ENCODE measurements at regions of chrX and their contacts with region 1.

Region 1: DNA sequence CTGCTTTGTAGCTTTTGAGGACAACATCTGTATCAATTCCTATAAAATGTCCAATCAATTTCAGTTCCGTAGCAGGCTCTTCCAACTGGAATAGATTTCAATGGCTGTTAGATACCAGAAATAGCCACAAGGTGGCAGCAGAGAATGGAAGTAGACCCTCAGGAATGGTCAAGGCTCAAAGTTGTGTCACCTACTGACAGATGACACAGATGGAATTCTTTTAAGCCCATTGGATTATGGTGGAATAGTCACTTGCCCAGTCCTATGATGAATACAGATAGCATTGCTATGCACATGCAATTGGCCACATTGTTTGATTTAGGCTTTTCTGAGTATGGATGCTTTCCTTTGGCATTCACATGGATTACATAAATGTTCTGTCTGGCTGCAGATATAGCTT is 130.4 kb upstream of the RADX start:
- DNase-seq: no peak
- H3K4me3 Mint-ChIP-seq: no peak overlapping the region
- H3K27ac Mint-ChIP-seq: no peak overlapping the region
- H3K4me1 Mint-ChIP-seq: peaks cover 27% of the 10 kb centered on the region
- H3K27me3 Mint-ChIP-seq: no peaks in the 10 kb centered on the region

Region 2: GRCh38 chrX:106451933-106452332 is 29.4 kb before region 1 on chrX:
- CTCF ChIA-PET with region 1: no interaction called
- POLR2A ChIA-PET with region 1: no interaction called
- intact Hi-C with region 1: loop called (anchors 2 kb)
- DNase-seq: no peak
- H3K4me3 Mint-ChIP-seq: no peak overlapping the region
- H3K27ac Mint-ChIP-seq: no peak overlapping the region
- H3K4me1 Mint-ChIP-seq: peaks cover 5% of the 10 kb centered on the region
- H3K27me3 Mint-ChIP-seq: no peaks in the 10 kb centered on the region

Region 3: GRCh38 chrX:106467422-106467821 is 13.9 kb before region 1 on chrX:
- CTCF ChIA-PET with region 1: no interaction called
- POLR2A ChIA-PET with region 1: no interaction called
- intact Hi-C with region 1: no loop called
- DNase-seq: no peak
- H3K4me3 Mint-ChIP-seq: no peak overlapping the region
- H3K27ac Mint-ChIP-seq: no peak overlapping the region
- H3K4me1 Mint-ChIP-seq: no peaks in the 10 kb centered on the region
- H3K27me3 Mint-ChIP-seq: peaks cover 3% of the 10 kb centered on the region

Region 4: DNA sequence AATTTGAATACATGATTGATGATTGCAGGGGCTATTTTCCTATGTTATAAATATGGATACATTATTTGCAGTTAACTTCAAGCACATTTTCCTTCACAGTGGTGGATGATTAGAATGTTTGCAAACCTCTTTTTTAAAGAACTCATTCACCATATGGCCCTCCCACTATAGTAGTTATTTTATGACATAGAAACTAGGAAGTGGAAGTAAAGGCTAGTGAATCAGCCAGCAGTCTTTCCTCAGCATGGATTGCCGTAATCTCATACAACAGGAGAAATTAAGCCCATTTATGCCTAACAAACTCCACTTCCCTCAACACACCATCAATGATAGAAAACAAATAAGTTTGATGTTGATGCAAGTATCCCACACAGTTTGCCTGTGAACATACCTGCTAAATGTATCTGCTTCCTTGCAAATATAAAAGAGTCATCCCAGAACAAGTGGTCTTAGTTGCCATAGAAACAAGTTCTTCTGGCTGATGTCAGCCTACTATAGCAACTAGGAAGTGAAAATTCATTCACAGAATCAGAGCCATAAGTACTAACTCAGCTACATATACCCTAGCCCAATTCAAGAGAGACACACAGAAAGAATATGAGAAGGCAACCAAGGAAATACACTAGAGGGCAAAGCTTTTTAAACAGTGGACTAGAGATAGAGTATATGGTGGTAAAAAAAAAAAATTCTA is 29.5 kb after region 1 on chrX:
- CTCF ChIA-PET with region 1: no interaction called
- POLR2A ChIA-PET with region 1: no interaction called
- intact Hi-C with region 1: no loop called
- DNase-seq: no peak
- H3K4me3 Mint-ChIP-seq: no peak overlapping the region
- H3K27ac Mint-ChIP-seq: no peak overlapping the region
- H3K4me1 Mint-ChIP-seq: no peaks in the 10 kb centered on the region
- H3K27me3 Mint-ChIP-seq: no peaks in the 10 kb centered on the region

Region 5: DNA sequence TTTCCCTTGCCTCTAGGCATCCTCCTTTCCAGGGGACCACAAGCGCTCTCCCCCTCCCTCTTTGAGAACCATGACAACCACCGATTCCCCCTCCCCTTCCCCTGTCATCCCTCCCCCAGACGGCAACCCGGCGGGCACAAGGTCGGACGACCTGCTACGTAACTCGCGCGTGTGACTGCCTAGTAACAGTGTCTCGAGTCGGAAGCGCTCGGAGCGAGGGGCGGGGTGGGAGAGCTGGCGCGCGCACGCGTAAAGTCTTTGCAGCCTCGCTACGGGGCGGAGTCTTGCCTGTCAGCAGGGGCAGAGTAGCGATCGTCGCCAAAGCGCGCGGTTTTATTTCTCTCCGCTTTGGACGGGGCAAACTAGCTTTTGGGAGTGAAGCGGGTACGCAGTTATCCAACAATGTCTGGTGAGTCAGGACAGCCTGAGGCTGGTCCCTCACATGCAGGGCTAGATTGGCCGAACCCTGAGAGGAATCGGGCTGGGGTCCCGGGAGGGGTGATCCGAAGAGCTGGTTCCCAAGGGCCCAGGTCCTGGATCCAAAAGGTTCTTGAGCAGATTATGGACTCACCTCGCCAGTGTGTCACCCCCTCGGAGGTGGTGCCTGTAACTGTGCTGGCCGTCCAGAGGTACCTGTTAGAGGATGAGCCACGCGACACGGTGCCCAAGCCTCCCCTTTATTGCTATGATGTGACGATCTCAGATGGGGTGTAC is 130.5 kb after region 1 on chrX and contains the start of gene RADX:
- CTCF ChIA-PET with region 1: interaction called, 9 read pairs
- POLR2A ChIA-PET with region 1: interaction called, 4 read pairs
- intact Hi-C with region 1: loop called (anchors 1 kb)
- DNase-seq: peak; percentile 92
- H3K4me3 Mint-ChIP-seq: peak within 1 kb of the TSS; percentile 84
- H3K27ac Mint-ChIP-seq: peak within 1 kb of the TSS; percentile 84
- H3K4me1 Mint-ChIP-seq: peaks cover 30% of the 10 kb centered on the region
- H3K27me3 Mint-ChIP-seq: no peaks in the 10 kb centered on the region
- total RNA-seq, gene RADX: 11.8 to 12.7 TPM

Region 6: DNA sequence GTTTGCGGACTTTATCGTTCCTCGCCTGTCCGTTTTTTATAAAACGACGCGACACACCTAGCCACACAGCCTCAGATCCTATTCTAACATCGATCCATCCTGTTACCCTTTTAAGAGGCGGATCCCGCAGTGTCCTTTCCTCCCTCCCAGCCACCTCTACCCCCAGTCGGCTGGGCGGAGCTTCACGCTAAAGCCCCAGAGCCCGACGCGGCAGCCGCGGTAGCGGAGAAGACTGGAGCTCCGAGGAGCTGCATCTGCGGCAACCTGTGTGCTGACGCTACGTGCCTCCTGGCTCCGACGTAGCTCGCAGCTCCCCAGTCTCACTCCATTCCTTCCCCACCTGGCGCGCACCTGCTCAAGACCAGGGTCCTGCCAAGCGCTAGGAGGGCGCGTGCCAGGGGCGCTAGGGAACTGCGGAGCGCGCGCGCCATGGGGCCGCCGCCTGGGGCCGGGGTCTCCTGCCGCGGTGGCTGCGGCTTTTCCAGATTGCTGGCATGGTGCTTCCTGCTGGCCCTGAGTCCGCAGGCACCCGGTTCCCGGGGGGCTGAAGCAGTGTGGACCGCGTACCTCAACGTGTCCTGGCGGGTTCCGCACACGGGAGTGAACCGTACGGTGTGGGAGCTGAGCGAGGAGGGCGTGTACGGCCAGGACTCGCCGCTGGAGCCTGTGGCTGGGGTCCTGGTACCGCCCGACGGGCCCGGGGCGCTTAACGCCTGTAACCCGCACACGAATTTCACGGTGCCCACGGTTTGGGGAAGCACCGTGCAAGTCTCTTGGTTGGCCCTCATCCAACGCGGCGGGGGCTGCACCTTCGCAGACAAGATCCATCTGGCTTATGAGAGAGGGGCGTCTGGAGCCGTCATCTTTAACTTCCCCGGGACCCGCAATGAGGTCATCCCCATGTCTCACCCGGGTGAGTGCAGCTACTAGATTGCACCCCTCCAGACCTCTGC is 245.4 kb after region 1 on chrX and contains the start of gene RNF128:
- CTCF ChIA-PET with region 1: no interaction called
- POLR2A ChIA-PET with region 1: no interaction called
- intact Hi-C with region 1: loop called (anchors 10 kb)
- DNase-seq: peak; percentile 43
- H3K4me3 Mint-ChIP-seq: peak within 1 kb of the TSS; percentile 69
- H3K27ac Mint-ChIP-seq: no peak within 1 kb of the TSS
- H3K4me1 Mint-ChIP-seq: peaks cover 5% of the 10 kb centered on the region
- H3K27me3 Mint-ChIP-seq: peaks cover 18% of the 10 kb centered on the region
- total RNA-seq, gene RNF128: not detected

Region 7: GRCh38 chrX:106933041-106933961 is 452.0 kb after region 1 on chrX:
- CTCF ChIA-PET with region 1: no interaction called
- POLR2A ChIA-PET with region 1: no interaction called
- intact Hi-C with region 1: no loop called
- DNase-seq: no peak
- H3K4me3 Mint-ChIP-seq: no peak overlapping the region
- H3K27ac Mint-ChIP-seq: no peak overlapping the region
- H3K4me1 Mint-ChIP-seq: peaks cover 5% of the 10 kb centered on the region
- H3K27me3 Mint-ChIP-seq: no peaks in the 10 kb centered on the region

Region 8: GRCh38 chrX:107146670-107147069 is 665.3 kb after region 1 on chrX:
- CTCF ChIA-PET with region 1: no interaction called
- POLR2A ChIA-PET with region 1: no interaction called
- intact Hi-C with region 1: no loop called
- DNase-seq: no peak
- H3K4me3 Mint-ChIP-seq: no peak overlapping the region
- H3K27ac Mint-ChIP-seq: no peak overlapping the region
- H3K4me1 Mint-ChIP-seq: no peaks in the 10 kb centered on the region
- H3K27me3 Mint-ChIP-seq: no peaks in the 10 kb centered on the region

Region 9: GRCh38 chrX:107716816-107717700 is 1235.7 kb after region 1 on chrX:
- CTCF ChIA-PET with region 1: no interaction called
- POLR2A ChIA-PET with region 1: no interaction called
- intact Hi-C with region 1: loop called (anchors 10 kb)
- DNase-seq: peak; percentile 91
- H3K4me3 Mint-ChIP-seq: peak overlapping the region; percentile 89
- H3K27ac Mint-ChIP-seq: peak overlapping the region; percentile 90
- H3K4me1 Mint-ChIP-seq: peaks cover 44% of the 10 kb centered on the region
- H3K27me3 Mint-ChIP-seq: no peaks in the 10 kb centered on the region